Kidney (tissue), 22 donors: ENCODE measurements at regions of chr3 and their contacts with region 1.

Region 1: DNA sequence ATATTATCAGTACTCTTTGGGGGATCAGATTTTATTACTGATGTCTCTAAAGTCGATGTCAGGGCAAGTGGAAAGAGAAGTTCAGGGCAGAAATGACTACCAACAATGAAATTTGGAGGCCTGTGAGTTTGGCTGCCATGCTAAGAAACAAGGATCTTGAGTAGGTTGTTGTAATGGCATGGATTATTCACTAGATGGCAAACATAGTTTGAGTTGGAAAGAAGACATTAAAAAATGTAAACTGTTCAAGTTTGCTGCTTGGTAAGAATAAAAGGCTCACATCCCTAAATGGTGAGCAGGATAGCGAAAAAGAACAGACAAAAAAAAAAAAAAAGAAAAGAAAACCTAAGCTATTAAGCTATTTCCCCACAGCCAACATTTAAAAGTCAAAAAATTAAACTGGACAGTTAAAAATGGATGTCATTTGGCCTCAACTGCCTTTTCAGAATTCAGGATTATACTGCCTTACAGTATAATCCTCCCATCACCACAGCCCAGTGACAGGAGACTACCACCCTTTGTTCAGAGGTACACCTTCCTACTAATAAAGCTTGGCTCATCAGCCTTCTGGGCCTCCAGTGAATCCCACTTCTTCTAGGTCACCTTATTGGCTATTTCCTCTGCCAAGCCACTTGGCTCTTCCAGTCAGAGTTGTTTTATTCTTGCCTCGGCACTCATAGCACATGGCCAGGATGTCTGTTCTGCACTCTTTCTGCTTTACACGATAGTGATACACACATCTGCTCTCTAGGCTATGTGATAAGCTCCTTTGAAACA is 163.7 kb downstream of the PLD1 start:
- DNase-seq: peak in 2 of 5 donors; percentile 65 to 77
- H3K4me3 ChIP-seq: no peak overlapping the region
- H3K27ac ChIP-seq: no peak overlapping the region
- H3K4me1 ChIP-seq: peaks cover 0 to 14% (median 5%) of the 10 kb centered on the region in 3 donors
- H3K27me3 ChIP-seq: no peaks in the 10 kb centered on the region
- CTCF ChIP-seq: peak; percentile 61

Region 2: DNA sequence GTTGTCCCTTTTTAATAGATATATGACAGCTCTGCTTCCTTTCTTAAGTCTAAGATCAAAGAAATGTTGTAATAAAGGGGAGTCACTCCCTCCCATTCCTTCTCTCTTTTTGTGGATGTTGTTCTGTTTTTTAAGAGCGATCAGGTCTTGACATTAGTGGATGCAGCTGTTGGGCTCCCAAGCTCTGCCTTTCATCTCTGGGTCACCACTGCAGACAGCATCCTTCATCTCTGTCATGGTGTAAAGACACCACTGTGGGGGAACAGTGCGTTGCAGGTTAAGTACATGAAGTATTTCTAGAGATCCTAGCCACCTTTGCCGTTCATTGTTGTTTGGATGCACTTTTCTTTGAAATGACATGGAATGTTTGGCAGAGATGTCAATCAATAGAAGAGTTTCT is 410.5 kb after region 1 on chr3:
- intact Hi-C with region 1: no loop called
- DNase-seq: peak in 2 of 5 donors; percentile 22 to 45
- H3K4me3 ChIP-seq: no peak overlapping the region
- H3K27ac ChIP-seq: no peak overlapping the region
- H3K4me1 ChIP-seq: peaks cover 4 to 9% (median 7%) of the 10 kb centered on the region in 3 donors
- H3K27me3 ChIP-seq: no peaks in the 10 kb centered on the region
- CTCF ChIP-seq: no peak

Region 3: DNA sequence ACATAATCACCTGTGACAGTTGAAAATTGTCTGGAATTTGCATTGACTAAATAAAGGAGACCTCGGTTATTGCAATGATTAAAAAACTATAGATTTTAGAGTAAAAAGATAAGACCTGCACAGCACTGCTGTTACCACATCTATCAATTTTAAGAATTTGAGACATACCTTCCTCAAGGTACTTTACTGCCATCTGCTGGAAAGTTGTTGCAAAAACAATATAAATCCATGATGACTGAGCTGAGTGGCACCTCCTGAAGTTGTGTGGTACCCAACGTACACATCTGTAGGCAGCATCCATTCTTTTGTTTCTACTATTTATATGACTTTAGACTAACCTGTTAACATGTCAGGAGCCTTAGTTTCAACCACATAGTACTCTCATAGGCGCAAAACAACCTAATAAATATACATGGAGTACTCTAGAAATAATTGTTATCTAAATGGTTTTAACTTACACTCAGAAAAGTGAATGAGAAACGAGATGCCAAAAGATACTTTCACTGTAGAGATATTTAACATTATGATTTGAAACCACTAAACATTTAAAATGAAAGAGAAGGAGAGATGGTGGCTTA is 695.0 kb after region 1 on chr3:
- intact Hi-C with region 1: loop called (anchors 10 kb)
- DNase-seq: peak in 2 of 5 donors; percentile 70 to 78
- H3K4me3 ChIP-seq: no peak overlapping the region
- H3K27ac ChIP-seq: no peak overlapping the region
- H3K4me1 ChIP-seq: no peaks in the 10 kb centered on the region
- H3K27me3 ChIP-seq: no peaks in the 10 kb centered on the region
- CTCF ChIP-seq: peak; percentile 57